ENCODE measurements at regions of chr14 and their contacts with region 1.

Region 1: GRCh38 chr14:24215495-24216344 is at the start of gene MDP1:
- DNase-seq: peak; percentile 94
- ATAC-seq: peak; percentile 75
- H3K4me3 ChIP-seq: peak within 1 kb of the TSS; percentile 88 to 99 (median 96)
- H3K4me3 Mint-ChIP-seq: peak within 1 kb of the TSS; percentile 93
- H3K27ac ChIP-seq: peak within 1 kb of the TSS; percentile 89 to 98
- H3K27ac Mint-ChIP-seq: peak within 1 kb of the TSS; percentile 96
- H3K4me1 ChIP-seq: peaks cover 32 to 33% of the 10 kb centered on the region in 2 donors
- H3K4me1 Mint-ChIP-seq: peaks cover 38% of the 10 kb centered on the region
- H3K27me3 ChIP-seq: no peaks in the 10 kb centered on the region
- H3K27me3 Mint-ChIP-seq: no peaks in the 10 kb centered on the region
- CTCF ChIP-seq: peak; percentile 80
- total RNA-seq, gene MDP1: 11.3 and 17.0 TPM in 2 replicates

Region 2: GRCh38 chr14:23646648-23647549 is 568.8 kb before region 1 on chr14:
- CTCF ChIA-PET with region 1: no interaction called
- POLR2A ChIA-PET with region 1: no interaction called
- intact Hi-C with region 1: no loop called
- DNase-seq: no peak
- ATAC-seq: no peak
- H3K4me3 ChIP-seq: no peak overlapping the region
- H3K4me3 Mint-ChIP-seq: no peak overlapping the region
- H3K27ac ChIP-seq: no peak overlapping the region
- H3K27ac Mint-ChIP-seq: no peak overlapping the region
- H3K4me1 ChIP-seq: no peaks in the 10 kb centered on the region
- H3K4me1 Mint-ChIP-seq: no peaks in the 10 kb centered on the region
- H3K27me3 ChIP-seq: peaks cover 0 to 8% (median 0%) of the 10 kb centered on the region in 4 experiments
- H3K27me3 Mint-ChIP-seq: peaks cover 25% of the 10 kb centered on the region
- CTCF ChIP-seq: no peak

Region 3: GRCh38 chr14:24093901-24094761 is 121.6 kb before region 1 on chr14 and contains the start of gene PCK2:
- CTCF ChIA-PET with region 1: interaction called, 3 read pairs
- POLR2A ChIA-PET with region 1: interaction called, 16 read pairs
- intact Hi-C with region 1: no loop called
- DNase-seq: peak; percentile 81
- ATAC-seq: peak; percentile 66
- H3K4me3 ChIP-seq: peak within 1 kb of the TSS; percentile 62 to 97 (median 89)
- H3K4me3 Mint-ChIP-seq: peak within 1 kb of the TSS; percentile 95
- H3K27ac ChIP-seq: peak within 1 kb of the TSS; percentile 80 to 95
- H3K27ac Mint-ChIP-seq: peak within 1 kb of the TSS; percentile 92
- H3K4me1 ChIP-seq: peaks cover 5 to 35% of the 10 kb centered on the region in 2 donors
- H3K4me1 Mint-ChIP-seq: peaks cover 38% of the 10 kb centered on the region
- H3K27me3 ChIP-seq: no peaks in the 10 kb centered on the region
- H3K27me3 Mint-ChIP-seq: no peaks in the 10 kb centered on the region
- CTCF ChIP-seq: peak; percentile 28
- total RNA-seq, gene PCK2: 34.1 and 40.4 TPM in 2 replicates

Region 4: DNA sequence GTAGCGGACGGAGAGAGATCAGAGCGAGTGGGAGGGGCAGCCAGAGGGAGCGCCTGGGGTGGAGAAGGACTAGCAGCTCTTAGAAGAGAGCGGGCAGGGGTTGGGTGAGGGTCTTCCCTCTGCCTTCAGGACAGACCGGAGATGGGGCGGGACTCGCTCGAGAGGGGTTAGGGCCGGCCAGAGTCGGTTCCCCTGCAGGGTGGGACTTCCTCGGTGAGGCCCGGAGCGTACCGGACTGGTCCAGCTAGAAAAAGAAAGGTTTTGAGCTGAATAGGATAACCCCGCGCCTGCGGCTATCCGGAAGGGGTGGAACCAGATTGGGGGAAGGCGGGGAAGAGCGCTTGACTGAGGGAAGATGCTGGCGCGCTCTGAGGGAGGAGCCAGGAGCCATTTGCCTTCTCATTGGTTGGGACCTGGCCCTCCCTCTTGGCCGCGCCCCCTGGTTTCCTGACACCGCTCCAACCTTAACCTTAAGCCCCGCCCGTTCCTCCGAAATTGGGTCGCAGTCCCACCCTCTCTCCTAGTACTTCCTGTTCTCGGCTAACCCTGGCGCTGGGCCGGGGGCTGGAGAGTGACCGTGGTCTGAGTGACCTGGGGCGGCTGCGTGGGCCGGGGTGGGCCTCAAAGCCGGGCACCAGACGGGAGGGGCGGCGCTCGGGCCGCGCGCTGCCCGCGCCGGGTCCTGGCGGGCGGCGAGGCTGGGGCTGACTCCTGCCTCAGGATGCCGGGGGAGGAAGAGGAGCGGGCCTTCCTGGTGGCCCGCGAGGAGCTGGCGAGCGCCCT is 68.6 kb before region 1 on chr14 and contains the start of gene RNF31:
- CTCF ChIA-PET with region 1: interaction called, 3 read pairs
- POLR2A ChIA-PET with region 1: interaction called, 7 read pairs
- intact Hi-C with region 1: loop called (anchors 1 kb)
- DNase-seq: peak; percentile 98
- ATAC-seq: peak; percentile 84
- H3K4me3 ChIP-seq: peak within 1 kb of the TSS; percentile 83 to 95 (median 94)
- H3K4me3 Mint-ChIP-seq: peak within 1 kb of the TSS; percentile 95
- H3K27ac ChIP-seq: peak within 1 kb of the TSS; percentile 77 to 90
- H3K27ac Mint-ChIP-seq: peak within 1 kb of the TSS; percentile 95
- H3K4me1 ChIP-seq: peaks cover 21 to 35% of the 10 kb centered on the region in 2 donors
- H3K4me1 Mint-ChIP-seq: peaks cover 50% of the 10 kb centered on the region
- H3K27me3 ChIP-seq: no peaks in the 10 kb centered on the region
- H3K27me3 Mint-ChIP-seq: no peaks in the 10 kb centered on the region
- CTCF ChIP-seq: no peak
- total RNA-seq, gene RNF31: 103 and 114 TPM in 2 replicates

Region 5: GRCh38 chr14:24188251-24189058 is 27.3 kb before region 1 on chr14 and contains the start of gene IPO4:
- CTCF ChIA-PET with region 1: interaction called, 7 read pairs
- POLR2A ChIA-PET with region 1: interaction called, 9 read pairs
- intact Hi-C with region 1: loop called (anchors 1 kb)
- DNase-seq: peak; percentile 96
- ATAC-seq: peak; percentile 93
- H3K4me3 ChIP-seq: peak within 1 kb of the TSS; percentile 32 to 79 (median 70)
- H3K4me3 Mint-ChIP-seq: peak within 1 kb of the TSS; percentile 93
- H3K27ac ChIP-seq: peak within 1 kb of the TSS; percentile 63 to 86
- H3K27ac Mint-ChIP-seq: peak within 1 kb of the TSS; percentile 87
- H3K4me1 ChIP-seq: peaks cover 14 to 17% of the 10 kb centered on the region in 2 donors
- H3K4me1 Mint-ChIP-seq: peaks cover 35% of the 10 kb centered on the region
- H3K27me3 ChIP-seq: no peaks in the 10 kb centered on the region
- H3K27me3 Mint-ChIP-seq: no peaks in the 10 kb centered on the region
- CTCF ChIP-seq: no peak
- total RNA-seq, gene IPO4: 29.8 and 35.0 TPM in 2 replicates

Region 6: GRCh38 chr14:24232121-24232644 is 16.5 kb after region 1 on chr14 and contains the start of gene NEDD8:
- CTCF ChIA-PET with region 1: interaction called, 8 read pairs
- POLR2A ChIA-PET with region 1: interaction called, 13 read pairs
- intact Hi-C with region 1: loop called (anchors 1 kb)
- DNase-seq: peak; percentile 95
- ATAC-seq: peak; percentile 86
- H3K4me3 ChIP-seq: peak within 1 kb of the TSS; percentile 75 to 100 (median 97)
- H3K4me3 Mint-ChIP-seq: peak within 1 kb of the TSS; percentile 96
- H3K27ac ChIP-seq: peak within 1 kb of the TSS; percentile 36 to 67
- H3K27ac Mint-ChIP-seq: peak within 1 kb of the TSS; percentile 95
- H3K4me1 ChIP-seq: peaks cover 18 to 24% of the 10 kb centered on the region in 2 donors
- H3K4me1 Mint-ChIP-seq: peaks cover 55% of the 10 kb centered on the region
- H3K27me3 ChIP-seq: no peaks in the 10 kb centered on the region
- H3K27me3 Mint-ChIP-seq: no peaks in the 10 kb centered on the region
- CTCF ChIP-seq: no peak
- total RNA-seq, gene NEDD8: 86.6 and 98.5 TPM in 2 replicates

Region 7: GRCh38 chr14:24299255-24300195 is 83.8 kb after region 1 on chr14 and contains the starts of genes DHRS1 and NOP9:
- CTCF ChIA-PET with region 1: interaction called, 31 read pairs
- POLR2A ChIA-PET with region 1: interaction called, 3 read pairs
- intact Hi-C with region 1: loop called (anchors 1 kb)
- DNase-seq: peak; percentile 95
- ATAC-seq: peak; percentile 86
- H3K4me3 ChIP-seq: peak within 1 kb of the TSS; percentile 58 to 93 (median 77)
- H3K4me3 Mint-ChIP-seq: peak within 1 kb of the TSS; percentile 96
- H3K27ac ChIP-seq: peak within 1 kb of the TSS; percentile 79 to 83
- H3K27ac Mint-ChIP-seq: peak within 1 kb of the TSS; percentile 98
- H3K4me1 ChIP-seq: peaks cover 30 to 41% of the 10 kb centered on the region in 2 donors
- H3K4me1 Mint-ChIP-seq: peaks cover 48% of the 10 kb centered on the region
- H3K27me3 ChIP-seq: no peaks in the 10 kb centered on the region
- H3K27me3 Mint-ChIP-seq: no peaks in the 10 kb centered on the region
- CTCF ChIP-seq: no peak
- total RNA-seq, gene DHRS1: 42.7 and 43.7 TPM in 2 replicates
- total RNA-seq, gene NOP9: 22.6 and 24.5 TPM in 2 replicates

Region 8: GRCh38 chr14:24431569-24432258 is 216.0 kb after region 1 on chr14:
- CTCF ChIA-PET with region 1: interaction called, 5 read pairs
- POLR2A ChIA-PET with region 1: interaction called, 4 read pairs
- intact Hi-C with region 1: loop called (anchors 1 kb)
- DNase-seq: peak; percentile 90
- ATAC-seq: peak; percentile 41
- H3K4me3 ChIP-seq: peak overlapping the region in 4 of 5 experiments; percentile 77 to 98 (median 93)
- H3K4me3 Mint-ChIP-seq: peak overlapping the region; percentile 94
- H3K27ac ChIP-seq: peak overlapping the region; percentile 98 to 99
- H3K27ac Mint-ChIP-seq: peak overlapping the region; percentile 98
- H3K4me1 ChIP-seq: peaks cover 32 to 43% of the 10 kb centered on the region in 2 donors
- H3K4me1 Mint-ChIP-seq: peaks cover 50% of the 10 kb centered on the region
- H3K27me3 ChIP-seq: no peaks in the 10 kb centered on the region
- H3K27me3 Mint-ChIP-seq: no peaks in the 10 kb centered on the region
- CTCF ChIP-seq: peak; percentile 87

Measured in B cell (primary cell).